ENCODE measurements at regions of chr4 and their contacts with region 1.

Region 1: DNA sequence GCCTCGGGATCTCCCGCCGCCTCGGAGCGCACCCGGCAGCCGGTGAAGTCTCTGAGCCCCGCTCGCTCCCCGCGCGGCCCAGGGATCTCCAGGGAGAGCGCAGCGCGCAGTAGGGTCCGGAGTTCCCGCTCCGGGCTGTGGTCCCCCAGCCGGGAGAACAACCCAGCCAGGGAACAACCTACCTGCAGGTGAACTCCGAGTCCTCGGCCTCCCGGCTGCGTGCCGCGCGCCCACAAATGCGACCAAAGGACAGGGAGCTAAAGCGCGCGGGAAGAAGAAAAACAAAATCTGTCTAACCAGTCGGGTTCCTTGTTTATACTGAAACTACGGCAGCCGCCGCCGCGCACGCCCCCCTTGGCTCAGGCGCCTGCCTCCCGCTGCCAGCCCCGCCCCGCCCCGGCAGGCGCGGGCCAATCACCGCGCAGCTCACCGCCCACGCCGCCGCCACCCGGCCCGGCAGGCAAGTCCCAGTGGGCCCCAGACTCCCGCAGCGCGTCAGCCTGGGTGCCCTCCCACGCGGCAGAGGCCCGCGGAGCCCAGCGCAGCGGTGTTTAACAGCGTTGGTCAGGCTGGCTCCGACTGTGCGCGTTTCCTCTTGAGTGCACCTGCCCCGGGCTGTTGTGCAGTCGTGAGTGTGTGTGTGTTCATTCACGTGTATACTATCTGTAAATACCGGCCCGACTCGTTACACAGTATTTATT is at the start of gene RASGEF1B:
- DNase-seq: peak; percentile 97
- ATAC-seq: peak; percentile 82
- H3K4me3 Mint-ChIP-seq: peak within 1 kb of the TSS; percentile 92
- H3K27ac Mint-ChIP-seq: peak within 1 kb of the TSS; percentile 97
- H3K4me1 Mint-ChIP-seq: peaks cover 53% of the 10 kb centered on the region
- H3K27me3 Mint-ChIP-seq: no peaks in the 10 kb centered on the region
- CTCF ChIP-seq: no peak
- total RNA-seq, gene RASGEF1B: 40.2 and 43.7 TPM in 2 replicates

Region 2: DNA sequence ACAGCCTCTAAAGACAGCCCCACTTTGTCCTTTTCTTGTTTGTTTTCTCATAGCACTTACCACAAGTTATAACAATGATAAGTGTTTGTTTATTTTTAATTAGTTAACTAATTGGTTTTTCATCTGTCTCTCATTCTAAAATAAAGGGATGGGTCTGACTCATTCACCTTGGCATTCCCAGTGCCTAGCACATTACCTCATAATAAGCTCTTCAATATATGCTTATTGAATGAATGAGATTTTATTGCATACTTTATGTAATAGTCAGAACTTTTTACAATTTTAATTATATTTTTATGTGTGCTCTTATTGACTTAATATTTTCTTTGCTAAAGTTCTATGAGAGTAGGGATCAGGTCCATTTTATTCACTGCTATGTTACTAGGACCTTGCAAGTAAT is 233.9 kb before region 1 on chr4:
- CTCF ChIA-PET with region 1: no interaction called
- POLR2A ChIA-PET with region 1: no interaction called
- intact Hi-C with region 1: no loop called
- DNase-seq: no peak
- ATAC-seq: no peak
- H3K4me3 Mint-ChIP-seq: no peak overlapping the region
- H3K27ac Mint-ChIP-seq: no peak overlapping the region
- H3K4me1 Mint-ChIP-seq: no peaks in the 10 kb centered on the region
- H3K27me3 Mint-ChIP-seq: no peaks in the 10 kb centered on the region
- CTCF ChIP-seq: no peak

Region 3: GRCh38 chr4:81412946-81413495 is 58.7 kb before region 1 on chr4:
- CTCF ChIA-PET with region 1: no interaction called
- POLR2A ChIA-PET with region 1: no interaction called
- intact Hi-C with region 1: no loop called
- DNase-seq: no peak
- ATAC-seq: no peak
- H3K4me3 Mint-ChIP-seq: no peak overlapping the region
- H3K27ac Mint-ChIP-seq: no peak overlapping the region
- H3K4me1 Mint-ChIP-seq: peaks cover 2% of the 10 kb centered on the region
- H3K27me3 Mint-ChIP-seq: no peaks in the 10 kb centered on the region
- CTCF ChIP-seq: no peak

Region 4: GRCh38 chr4:81454499-81454898 is 17.2 kb before region 1 on chr4:
- CTCF ChIA-PET with region 1: interaction called, 14 read pairs
- POLR2A ChIA-PET with region 1: interaction called, 10 read pairs
- intact Hi-C with region 1: no loop called
- DNase-seq: no peak
- ATAC-seq: peak; percentile 80
- H3K4me3 Mint-ChIP-seq: no peak overlapping the region
- H3K27ac Mint-ChIP-seq: peak overlapping the region; percentile 61
- H3K4me1 Mint-ChIP-seq: peaks cover 52% of the 10 kb centered on the region
- H3K27me3 Mint-ChIP-seq: no peaks in the 10 kb centered on the region
- CTCF ChIP-seq: no peak

Region 5: GRCh38 chr4:81512757-81513501 is 41.2 kb after region 1 on chr4:
- CTCF ChIA-PET with region 1: interaction called, 5 read pairs
- POLR2A ChIA-PET with region 1: interaction called, 20 read pairs
- intact Hi-C with region 1: loop called (anchors 2 kb)
- DNase-seq: no peak
- ATAC-seq: peak; percentile 65
- H3K4me3 Mint-ChIP-seq: peak overlapping the region; percentile 60
- H3K27ac Mint-ChIP-seq: peak overlapping the region; percentile 84
- H3K4me1 Mint-ChIP-seq: peaks cover 73% of the 10 kb centered on the region
- H3K27me3 Mint-ChIP-seq: no peaks in the 10 kb centered on the region
- CTCF ChIP-seq: no peak

Region 6: DNA sequence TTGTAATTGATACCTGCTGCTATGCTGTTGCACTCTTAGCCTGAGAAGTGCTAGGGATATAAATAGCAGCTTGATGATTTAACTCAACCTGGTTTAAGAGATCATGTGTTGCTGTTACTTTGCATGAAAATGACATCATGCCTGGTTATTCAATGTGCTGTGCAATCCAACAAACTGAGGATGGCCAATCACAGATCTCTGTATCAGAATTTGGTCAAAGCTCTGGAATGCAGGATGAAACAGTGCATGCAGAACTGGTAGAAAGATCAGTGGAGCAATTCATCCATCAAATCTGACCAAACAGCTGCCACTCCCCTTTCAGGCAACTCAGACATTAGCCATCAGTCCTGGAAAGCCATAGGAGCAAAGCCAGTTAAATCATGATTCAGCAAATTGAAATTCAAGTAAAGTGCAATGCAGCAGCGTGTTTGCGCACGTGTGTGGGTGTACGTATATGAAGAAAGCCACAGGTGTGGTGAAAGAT is 160.3 kb after region 1 on chr4:
- CTCF ChIA-PET with region 1: interaction called, 4 read pairs
- POLR2A ChIA-PET with region 1: interaction called, 6 read pairs
- intact Hi-C with region 1: loop called (anchors 1 kb)
- DNase-seq: no peak
- ATAC-seq: peak; percentile 57
- H3K4me3 Mint-ChIP-seq: peak overlapping the region; percentile 15
- H3K27ac Mint-ChIP-seq: peak overlapping the region; percentile 60
- H3K4me1 Mint-ChIP-seq: peaks cover 60% of the 10 kb centered on the region
- H3K27me3 Mint-ChIP-seq: no peaks in the 10 kb centered on the region
- CTCF ChIP-seq: no peak

Region 7: GRCh38 chr4:81844717-81845116 is 373.0 kb after region 1 on chr4:
- CTCF ChIA-PET with region 1: interaction called, 239 read pairs
- POLR2A ChIA-PET with region 1: interaction called, 26 read pairs
- intact Hi-C with region 1: loop called (anchors 1 kb)
- DNase-seq: peak; percentile 33
- ATAC-seq: peak; percentile 98
- H3K4me3 Mint-ChIP-seq: no peak overlapping the region
- H3K27ac Mint-ChIP-seq: no peak overlapping the region
- H3K4me1 Mint-ChIP-seq: peaks cover 4% of the 10 kb centered on the region
- H3K27me3 Mint-ChIP-seq: no peaks in the 10 kb centered on the region
- CTCF ChIP-seq: peak; percentile 69

Region 8: GRCh38 chr4:82201805-82202641 is 730.3 kb after region 1 on chr4:
- CTCF ChIA-PET with region 1: interaction called, 6 read pairs
- POLR2A ChIA-PET with region 1: no interaction called
- intact Hi-C with region 1: loop called (anchors 1 kb)
- DNase-seq: no peak
- ATAC-seq: peak; percentile 50
- H3K4me3 Mint-ChIP-seq: no peak overlapping the region
- H3K27ac Mint-ChIP-seq: no peak overlapping the region
- H3K4me1 Mint-ChIP-seq: no peaks in the 10 kb centered on the region
- H3K27me3 Mint-ChIP-seq: peaks cover 16% of the 10 kb centered on the region
- CTCF ChIP-seq: no peak

Region 9: DNA sequence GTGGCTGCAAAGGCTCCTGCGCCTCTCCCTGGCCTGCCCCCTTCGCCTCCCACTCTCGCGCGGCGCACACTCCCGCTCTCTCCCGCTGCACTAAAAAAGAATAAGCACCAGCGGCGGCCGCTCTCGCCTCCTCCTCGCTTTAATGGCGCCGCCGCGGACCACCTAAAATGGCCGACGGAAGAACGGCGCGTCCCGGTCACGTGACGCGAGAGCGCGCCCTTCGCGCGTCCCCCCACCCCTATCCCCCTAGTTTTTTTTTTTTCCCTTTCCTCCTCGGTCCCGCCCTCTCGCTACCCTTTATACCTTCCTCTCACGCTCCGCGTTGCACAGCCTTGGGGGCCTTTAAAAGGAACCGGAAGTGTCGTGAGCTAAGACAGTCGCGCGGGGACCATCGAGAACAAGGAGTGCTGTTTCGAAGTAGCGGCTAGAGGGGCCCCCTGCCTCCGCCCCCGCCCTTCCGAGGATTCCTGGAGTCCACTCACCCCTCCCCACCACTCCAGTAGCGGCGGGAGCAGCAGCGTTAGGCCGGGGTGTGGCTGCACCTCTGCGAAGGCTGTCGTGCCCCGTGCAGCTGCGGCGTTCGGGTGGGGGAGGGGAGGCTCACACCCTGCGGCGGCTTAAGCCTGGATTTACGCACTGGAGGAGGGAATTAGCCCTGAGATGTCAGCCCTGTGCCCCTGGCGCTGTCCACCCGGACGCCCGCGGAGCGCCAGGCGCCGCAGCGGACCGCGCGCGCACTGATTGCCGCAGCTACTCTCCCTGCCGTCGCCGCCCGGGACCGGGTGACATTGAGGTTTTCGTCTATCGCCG is 902.3 kb after region 1 on chr4 and contains the start of gene HNRNPD:
- CTCF ChIA-PET with region 1: no interaction called
- POLR2A ChIA-PET with region 1: interaction called, 4 read pairs
- intact Hi-C with region 1: loop called (anchors 1 kb)
- DNase-seq: peak; percentile 83
- ATAC-seq: peak; percentile 88
- H3K4me3 Mint-ChIP-seq: peak within 1 kb of the TSS; percentile 98
- H3K27ac Mint-ChIP-seq: peak within 1 kb of the TSS; percentile 100
- H3K4me1 Mint-ChIP-seq: peaks cover 55% of the 10 kb centered on the region
- H3K27me3 Mint-ChIP-seq: no peaks in the 10 kb centered on the region
- CTCF ChIP-seq: no peak
- total RNA-seq, gene HNRNPD: 300 and 350 TPM in 2 replicates